ENCODE measurements at regions of chr5 and their contacts with region 1.

Region 1: GRCh38 chr5:39283231-39283818 is 64.0 kb upstream of the FYB1 start:
- DNase-seq: peak in 2 of 10 donors; percentile 20 to 26

Region 2: GRCh38 chr5:38994324-38994927 is 288.9 kb before region 1 on chr5:
- intact Hi-C with region 1: loop called (anchors 5 kb)
- DNase-seq: peak in 1 of 10 donors; percentile 17

Region 3: DNA sequence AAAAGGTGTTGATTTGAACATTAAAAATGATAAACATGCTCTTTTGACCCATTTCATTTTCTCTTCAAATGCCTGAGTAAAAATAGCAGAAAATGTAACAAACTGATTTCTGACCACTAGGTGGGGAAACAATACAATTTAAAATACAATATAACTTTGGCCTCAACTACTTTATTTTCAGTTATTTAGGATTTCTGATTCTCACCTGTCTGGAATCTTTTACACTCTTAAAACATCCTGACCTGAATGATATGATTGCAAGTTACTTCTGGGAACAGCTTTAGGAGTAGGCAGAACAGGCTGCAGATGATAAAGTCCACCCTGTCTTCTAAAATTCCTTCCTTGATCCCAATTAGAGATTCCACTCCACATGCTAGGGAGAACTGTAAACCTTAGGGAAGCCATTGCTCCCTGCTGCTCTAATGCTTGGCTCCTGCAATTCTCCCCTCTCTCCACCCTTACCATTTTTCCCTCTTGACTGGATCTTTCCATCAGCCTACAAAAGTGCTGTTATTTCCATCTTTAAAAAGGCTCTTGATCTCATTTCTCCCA is 134.3 kb before region 1 on chr5:
- intact Hi-C with region 1: loop called (anchors 5 kb)
- DNase-seq: no peak

Region 4: GRCh38 chr5:39217365-39218281 is 65.7 kb before region 1 on chr5:
- intact Hi-C with region 1: loop called (anchors 1 kb)
- DNase-seq: peak in 9 of 10 donors; percentile 34 to 91 (median 64)

Region 5: DNA sequence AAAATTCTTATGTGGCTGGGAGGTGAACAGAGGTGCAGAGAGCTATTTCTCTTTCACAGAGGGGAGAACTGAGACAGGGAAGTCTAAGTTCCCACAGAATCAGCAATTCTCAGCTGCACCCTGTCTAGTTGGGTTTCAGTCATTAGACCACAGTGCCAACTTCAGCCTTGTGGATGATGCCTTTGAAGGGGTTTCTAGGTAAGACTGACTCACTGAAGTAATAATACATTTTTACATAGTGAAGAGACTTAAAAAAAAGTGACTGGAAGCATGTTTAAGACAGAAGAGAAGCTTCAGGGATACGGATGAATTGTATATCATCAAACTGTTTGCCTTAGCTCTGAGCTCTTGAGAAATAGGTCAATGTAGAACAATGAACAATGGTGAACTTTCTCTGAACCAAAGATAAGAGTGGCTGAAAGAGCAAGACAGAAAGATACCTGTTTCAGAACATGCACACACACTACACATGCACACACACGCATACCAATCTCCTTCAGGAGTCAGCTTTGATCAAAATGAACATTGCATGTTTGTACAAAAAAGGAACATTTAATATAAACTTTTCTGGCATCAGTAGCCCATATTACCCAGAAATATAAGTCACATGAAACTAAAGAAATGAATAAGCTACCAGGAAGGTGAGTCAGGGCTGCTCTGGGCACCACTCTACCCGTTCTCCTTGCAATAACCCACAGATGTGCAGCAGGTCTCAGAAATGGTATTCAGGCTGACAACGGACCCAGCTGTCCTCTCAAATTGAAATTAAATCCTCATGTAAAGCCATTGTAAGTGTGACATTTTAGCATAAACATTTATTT is 51.4 kb before region 1 on chr5:
- intact Hi-C with region 1: no loop called
- DNase-seq: no peak